Endothelial cell of umbilical vein (primary cell): ENCODE measurements at regions of chr2 and their contacts with region 1.

Region 1: DNA sequence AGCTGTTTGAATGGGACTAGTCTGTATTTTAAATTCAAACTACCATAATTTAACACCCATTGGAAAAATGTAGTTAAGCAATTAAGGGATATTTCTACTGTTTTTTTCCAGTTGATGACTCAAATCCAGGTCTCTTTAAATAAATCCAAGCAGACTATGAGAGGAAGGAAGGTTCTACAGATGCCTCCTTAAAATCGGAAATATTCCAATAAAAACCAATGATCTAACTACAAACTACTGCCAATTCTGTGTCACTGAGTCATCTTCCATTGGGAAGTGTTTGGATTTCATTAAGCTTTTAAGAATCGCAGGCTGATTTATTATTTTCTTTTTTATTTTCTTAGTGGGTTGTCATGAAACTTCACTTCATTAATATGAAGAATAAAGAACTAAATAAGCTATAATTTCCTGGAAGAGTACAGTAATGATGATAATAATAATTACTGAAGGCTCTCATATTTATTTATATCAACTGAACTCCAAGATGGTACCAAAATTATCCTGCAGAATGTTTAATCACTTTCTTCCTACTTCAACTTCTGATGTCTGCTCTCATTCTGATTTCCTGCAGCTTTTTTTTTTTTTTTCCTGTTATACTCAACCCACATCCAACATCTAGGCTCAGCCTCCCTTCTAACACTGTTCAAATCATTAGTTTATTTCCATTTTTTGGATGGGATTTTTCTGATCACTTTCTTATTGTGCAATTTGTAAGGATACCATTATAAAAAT is 166.3 kb upstream of the FN1 start:
- DNase-seq: peak; percentile 97
- H3K4me3 ChIP-seq: peak overlapping the region in 1 of 3 experiments; percentile 19
- H3K27ac ChIP-seq: peak overlapping the region; percentile 85
- H3K4me1 ChIP-seq: peaks cover 24% of the 10 kb centered on the region
- H3K27me3 ChIP-seq: no peaks in the 10 kb centered on the region
- CTCF ChIP-seq: no peak
- POLR2A ChIP-seq: peak; percentile 62

Region 2: GRCh38 chr2:215367662-215368492 is 234.3 kb before region 1 on chr2:
- CTCF ChIA-PET with region 1: no interaction called
- POLR2A ChIA-PET with region 1: no interaction called
- dilution Hi-C with region 1: no loop called
- intact Hi-C with region 1: no loop called
- DNase-seq: peak; percentile 44
- H3K4me3 ChIP-seq: no peak overlapping the region
- H3K27ac ChIP-seq: no peak overlapping the region
- H3K4me1 ChIP-seq: no peaks in the 10 kb centered on the region
- H3K27me3 ChIP-seq: no peaks in the 10 kb centered on the region
- CTCF ChIP-seq: no peak
- POLR2A ChIP-seq: no peak

Region 3: DNA sequence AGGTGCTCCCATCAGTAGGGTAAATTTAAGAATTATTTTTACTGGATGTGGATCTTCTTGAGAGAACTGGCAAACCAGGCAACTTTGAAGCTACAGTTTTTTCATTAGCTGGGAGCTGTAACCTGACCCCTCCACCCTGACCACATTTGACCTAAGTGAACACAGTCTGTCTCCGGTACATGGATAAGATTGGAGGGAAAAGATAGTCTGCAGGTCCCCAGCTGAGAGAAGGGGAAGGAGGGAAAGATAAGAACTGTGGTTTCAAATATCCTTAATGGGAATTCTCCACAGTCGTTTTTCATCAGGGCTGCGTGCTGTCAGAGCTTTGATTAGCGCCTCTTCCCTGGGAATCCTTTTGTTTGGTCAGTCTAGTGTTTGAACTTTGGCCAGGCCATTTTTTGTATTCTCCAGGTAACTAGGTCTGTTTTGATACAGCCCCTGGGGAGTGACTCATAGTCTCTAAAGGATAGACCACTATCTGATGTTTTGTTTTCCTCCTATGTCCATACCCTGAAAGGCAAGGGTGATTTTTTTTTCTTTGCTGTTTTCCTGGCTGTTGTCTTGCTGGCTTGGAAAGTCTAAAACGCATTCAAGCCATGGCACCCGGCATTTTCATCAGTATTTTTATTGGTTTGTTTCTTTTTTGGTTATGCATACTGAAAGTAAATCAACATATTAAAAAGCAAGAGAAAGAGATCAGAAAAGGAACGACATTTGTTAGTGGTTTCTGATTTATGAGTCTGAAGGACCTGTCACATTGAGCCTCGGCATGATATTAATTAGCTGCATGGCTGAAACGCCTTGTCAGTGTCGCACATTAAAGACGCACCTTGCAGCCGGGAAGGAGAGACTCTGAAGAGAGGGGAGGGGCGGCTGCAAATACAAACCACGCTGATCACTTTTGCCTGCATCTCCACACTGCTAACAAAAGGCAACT is 17.1 kb after region 1 on chr2:
- CTCF ChIA-PET with region 1: no interaction called
- POLR2A ChIA-PET with region 1: no interaction called
- dilution Hi-C with region 1: no loop called
- intact Hi-C with region 1: loop called (anchors 1 kb)
- DNase-seq: peak; percentile 69
- H3K4me3 ChIP-seq: no peak overlapping the region
- H3K27ac ChIP-seq: peak overlapping the region; percentile 46
- H3K4me1 ChIP-seq: peaks cover 25% of the 10 kb centered on the region
- H3K27me3 ChIP-seq: no peaks in the 10 kb centered on the region
- CTCF ChIP-seq: no peak
- POLR2A ChIP-seq: peak; percentile 18

Region 4: GRCh38 chr2:215693193-215693998 is 91.2 kb after region 1 on chr2:
- CTCF ChIA-PET with region 1: no interaction called
- POLR2A ChIA-PET with region 1: interaction called, 3 read pairs
- dilution Hi-C with region 1: no loop called
- intact Hi-C with region 1: loop called (anchors 5 kb)
- DNase-seq: peak; percentile 85
- H3K4me3 ChIP-seq: no peak overlapping the region
- H3K27ac ChIP-seq: peak overlapping the region; percentile 83
- H3K4me1 ChIP-seq: peaks cover 33% of the 10 kb centered on the region
- H3K27me3 ChIP-seq: no peaks in the 10 kb centered on the region
- CTCF ChIP-seq: no peak
- POLR2A ChIP-seq: no peak